ENCODE measurements at regions of chr2 and their contacts with region 1.

Region 1: GRCh38 chr2:237322564-237322963 is 91.4 kb downstream of the COL6A3 start:
- DNase-seq: no peak
- ATAC-seq: no peak
- H3K4me3 ChIP-seq: no peak overlapping the region
- H3K27ac ChIP-seq: peak overlapping the region; percentile 57
- H3K4me1 ChIP-seq: peaks cover 8% of the 10 kb centered on the region
- H3K27me3 ChIP-seq: no peaks in the 10 kb centered on the region

Region 2: GRCh38 chr2:237165405-237166276 is 156.9 kb before region 1 on chr2:
- intact Hi-C with region 1: loop called in 1 of 4 experiments (anchors 10 kb)
- DNase-seq: no peak
- ATAC-seq: no peak
- H3K4me3 ChIP-seq: no peak overlapping the region
- H3K27ac ChIP-seq: no peak overlapping the region
- H3K4me1 ChIP-seq: no peaks in the 10 kb centered on the region
- H3K27me3 ChIP-seq: no peaks in the 10 kb centered on the region

Region 3: GRCh38 chr2:237196866-237197618 is 125.5 kb before region 1 on chr2:
- intact Hi-C with region 1: no loop called
- DNase-seq: no peak
- ATAC-seq: peak in 1 of 2 donors; percentile 77
- H3K4me3 ChIP-seq: no peak overlapping the region
- H3K27ac ChIP-seq: no peak overlapping the region
- H3K4me1 ChIP-seq: peaks cover 2% of the 10 kb centered on the region
- H3K27me3 ChIP-seq: no peaks in the 10 kb centered on the region

Region 4: GRCh38 chr2:237524631-237525030 is 202.1 kb after region 1 on chr2:
- intact Hi-C with region 1: no loop called
- DNase-seq: no peak
- ATAC-seq: no peak
- H3K4me3 ChIP-seq: no peak overlapping the region
- H3K27ac ChIP-seq: no peak overlapping the region
- H3K4me1 ChIP-seq: no peaks in the 10 kb centered on the region
- H3K27me3 ChIP-seq: no peaks in the 10 kb centered on the region

Region 5: DNA sequence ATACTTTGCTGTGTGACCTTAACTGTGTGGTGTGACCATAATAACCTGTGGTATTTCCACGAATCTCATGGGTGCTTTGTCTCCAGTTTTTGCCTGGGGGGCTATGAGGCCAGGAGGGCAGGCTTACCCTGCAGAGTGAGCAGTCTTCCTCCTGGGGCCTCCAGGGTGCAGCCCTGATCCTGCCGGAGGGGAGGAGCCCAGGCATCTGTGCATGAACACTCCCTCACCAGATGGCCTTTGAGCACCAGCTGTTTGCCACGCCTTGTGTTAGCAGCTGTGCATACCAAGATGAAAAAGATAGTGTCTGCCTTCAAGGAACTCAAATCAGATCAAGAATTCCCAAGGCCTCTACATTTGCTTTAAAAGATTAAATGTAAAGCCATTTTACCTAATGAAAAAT is 401.0 kb after region 1 on chr2:
- intact Hi-C with region 1: no loop called
- DNase-seq: no peak
- ATAC-seq: peak in 1 of 2 donors; percentile 61
- H3K4me3 ChIP-seq: no peak overlapping the region
- H3K27ac ChIP-seq: no peak overlapping the region
- H3K4me1 ChIP-seq: peaks cover 6% of the 10 kb centered on the region
- H3K27me3 ChIP-seq: no peaks in the 10 kb centered on the region